ENCODE measurements at regions of chr1 and their contacts with region 1.

Region 1: DNA sequence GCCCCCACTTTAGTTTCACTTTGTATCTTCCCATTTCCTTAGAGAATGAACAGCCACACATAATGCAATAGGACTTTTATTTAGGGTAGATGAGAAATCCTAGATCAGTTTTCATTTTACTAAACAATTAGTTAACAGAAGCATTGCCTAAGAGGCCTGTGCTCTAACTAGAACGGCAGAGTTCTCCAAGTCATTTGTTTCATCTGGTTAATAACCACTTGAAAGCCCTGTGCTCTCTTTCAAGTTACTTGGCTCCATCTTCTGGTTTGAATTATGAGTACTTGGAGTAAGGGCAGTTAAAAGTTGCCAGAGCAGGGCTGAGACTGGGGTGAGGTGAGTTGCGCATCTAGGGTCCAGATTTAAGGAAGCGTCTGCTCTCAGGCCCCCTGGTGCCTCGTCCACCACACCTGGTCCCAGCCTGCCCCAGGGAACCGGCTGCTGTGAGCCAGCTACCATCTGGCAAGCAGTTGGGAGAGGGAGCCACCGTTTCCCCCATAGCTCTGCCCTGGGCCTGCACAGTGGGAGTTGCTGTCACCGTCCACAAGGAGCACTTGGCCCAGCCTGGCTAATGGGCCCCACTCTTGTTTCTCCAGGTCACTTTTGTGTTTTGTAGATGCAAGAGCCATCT is 18.1 kb upstream of the SLC44A3 start:
- DNase-seq: peak; percentile 94
- ATAC-seq: peak; percentile 76
- H3K4me3 ChIP-seq: peak overlapping the region; percentile 13; the same call in 1 of the 2 replicates
- H3K27ac ChIP-seq: peak overlapping the region; percentile 90
- H3K4me1 ChIP-seq: peaks cover 14% of the 10 kb centered on the region
- H3K27me3 ChIP-seq: no peaks in the 10 kb centered on the region
- CTCF ChIP-seq: peak; percentile 88
- POLR2A ChIP-seq: 0 out of 2 replicates have a peak, but pooled peaks have one; percentile 40
- RAD21 ChIP-seq: peak; percentile 95

Region 2: GRCh38 chr1:94025383-94026340 is 776.4 kb before region 1 on chr1:
- CTCF ChIA-PET with region 1: no interaction called
- POLR2A ChIA-PET with region 1: no interaction called
- dilution Hi-C with region 1: no loop called
- in situ Hi-C with region 1: no loop called
- intact Hi-C with region 1: loop called (anchors 10 kb)
- DNase-seq: peak; percentile 79
- ATAC-seq: peak; percentile 50
- H3K4me3 ChIP-seq: no peak overlapping the region
- H3K27ac ChIP-seq: no peak overlapping the region
- H3K4me1 ChIP-seq: peaks cover 15% of the 10 kb centered on the region
- H3K27me3 ChIP-seq: no peaks in the 10 kb centered on the region
- CTCF ChIP-seq: peak; percentile 83
- POLR2A ChIP-seq: no peak
- RAD21 ChIP-seq: peak; percentile 81

Region 3: GRCh38 chr1:94335950-94336349 is 466.1 kb before region 1 on chr1:
- CTCF ChIA-PET with region 1: no interaction called
- POLR2A ChIA-PET with region 1: no interaction called
- dilution Hi-C with region 1: no loop called
- in situ Hi-C with region 1: no loop called
- intact Hi-C with region 1: loop called (anchors 2 kb)
- DNase-seq: peak; percentile 95
- ATAC-seq: peak; percentile 89
- H3K4me3 ChIP-seq: no peak overlapping the region
- H3K27ac ChIP-seq: no peak overlapping the region
- H3K4me1 ChIP-seq: peaks cover 8% of the 10 kb centered on the region
- H3K27me3 ChIP-seq: peaks cover 16% of the 10 kb centered on the region
- CTCF ChIP-seq: peak; percentile 100
- POLR2A ChIP-seq: peak; percentile 58
- RAD21 ChIP-seq: peak; percentile 100

Region 4: GRCh38 chr1:94514095-94514727 is 287.8 kb before region 1 on chr1:
- CTCF ChIA-PET with region 1: interaction called, 7 read pairs
- POLR2A ChIA-PET with region 1: no interaction called
- dilution Hi-C with region 1: no loop called
- in situ Hi-C with region 1: no loop called
- intact Hi-C with region 1: loop called (anchors 1 kb)
- DNase-seq: peak; percentile 24
- ATAC-seq: peak; percentile 82
- H3K4me3 ChIP-seq: no peak overlapping the region
- H3K27ac ChIP-seq: no peak overlapping the region
- H3K4me1 ChIP-seq: no peaks in the 10 kb centered on the region
- H3K27me3 ChIP-seq: no peaks in the 10 kb centered on the region
- CTCF ChIP-seq: peak; percentile 66
- POLR2A ChIP-seq: no peak
- RAD21 ChIP-seq: peak; percentile 65

Region 5: GRCh38 chr1:94599095-94599813 is 202.8 kb before region 1 on chr1:
- CTCF ChIA-PET with region 1: interaction called, 4 read pairs
- POLR2A ChIA-PET with region 1: no interaction called
- dilution Hi-C with region 1: no loop called
- in situ Hi-C with region 1: no loop called
- intact Hi-C with region 1: loop called (anchors 1 kb)
- DNase-seq: peak; percentile 51
- ATAC-seq: peak; percentile 42
- H3K4me3 ChIP-seq: no peak overlapping the region
- H3K27ac ChIP-seq: no peak overlapping the region
- H3K4me1 ChIP-seq: peaks cover 14% of the 10 kb centered on the region
- H3K27me3 ChIP-seq: peaks cover 3% of the 10 kb centered on the region
- CTCF ChIP-seq: peak; percentile 54
- POLR2A ChIP-seq: no peak
- RAD21 ChIP-seq: peak; percentile 67

Region 6: GRCh38 chr1:94727846-94728715 is 74.0 kb before region 1 on chr1:
- CTCF ChIA-PET with region 1: no interaction called
- POLR2A ChIA-PET with region 1: no interaction called
- dilution Hi-C with region 1: no loop called
- in situ Hi-C with region 1: no loop called
- intact Hi-C with region 1: loop called (anchors 2 kb)
- DNase-seq: peak; percentile 99
- ATAC-seq: peak; percentile 59
- H3K4me3 ChIP-seq: no peak overlapping the region
- H3K27ac ChIP-seq: peak overlapping the region; percentile 95
- H3K4me1 ChIP-seq: peaks cover 35% of the 10 kb centered on the region
- H3K27me3 ChIP-seq: no peaks in the 10 kb centered on the region
- CTCF ChIP-seq: no peak
- POLR2A ChIP-seq: no peak
- RAD21 ChIP-seq: peak; percentile 16; the same call in 1 of the 2 replicates

Region 7: GRCh38 chr1:94863919-94864318 is 61.9 kb after region 1 on chr1:
- CTCF ChIA-PET with region 1: no interaction called
- POLR2A ChIA-PET with region 1: no interaction called
- dilution Hi-C with region 1: no loop called
- in situ Hi-C with region 1: no loop called
- intact Hi-C with region 1: no loop called
- DNase-seq: peak; percentile 87
- ATAC-seq: peak; percentile 71
- H3K4me3 ChIP-seq: no peak overlapping the region
- H3K27ac ChIP-seq: peak overlapping the region; percentile 89
- H3K4me1 ChIP-seq: peaks cover 32% of the 10 kb centered on the region
- H3K27me3 ChIP-seq: no peaks in the 10 kb centered on the region
- CTCF ChIP-seq: no peak
- POLR2A ChIP-seq: no peak
- RAD21 ChIP-seq: no peak

Measured in IMR-90 (cell line).